ENCODE measurements at regions of chr7 and their contacts with region 1.

Region 1: DNA sequence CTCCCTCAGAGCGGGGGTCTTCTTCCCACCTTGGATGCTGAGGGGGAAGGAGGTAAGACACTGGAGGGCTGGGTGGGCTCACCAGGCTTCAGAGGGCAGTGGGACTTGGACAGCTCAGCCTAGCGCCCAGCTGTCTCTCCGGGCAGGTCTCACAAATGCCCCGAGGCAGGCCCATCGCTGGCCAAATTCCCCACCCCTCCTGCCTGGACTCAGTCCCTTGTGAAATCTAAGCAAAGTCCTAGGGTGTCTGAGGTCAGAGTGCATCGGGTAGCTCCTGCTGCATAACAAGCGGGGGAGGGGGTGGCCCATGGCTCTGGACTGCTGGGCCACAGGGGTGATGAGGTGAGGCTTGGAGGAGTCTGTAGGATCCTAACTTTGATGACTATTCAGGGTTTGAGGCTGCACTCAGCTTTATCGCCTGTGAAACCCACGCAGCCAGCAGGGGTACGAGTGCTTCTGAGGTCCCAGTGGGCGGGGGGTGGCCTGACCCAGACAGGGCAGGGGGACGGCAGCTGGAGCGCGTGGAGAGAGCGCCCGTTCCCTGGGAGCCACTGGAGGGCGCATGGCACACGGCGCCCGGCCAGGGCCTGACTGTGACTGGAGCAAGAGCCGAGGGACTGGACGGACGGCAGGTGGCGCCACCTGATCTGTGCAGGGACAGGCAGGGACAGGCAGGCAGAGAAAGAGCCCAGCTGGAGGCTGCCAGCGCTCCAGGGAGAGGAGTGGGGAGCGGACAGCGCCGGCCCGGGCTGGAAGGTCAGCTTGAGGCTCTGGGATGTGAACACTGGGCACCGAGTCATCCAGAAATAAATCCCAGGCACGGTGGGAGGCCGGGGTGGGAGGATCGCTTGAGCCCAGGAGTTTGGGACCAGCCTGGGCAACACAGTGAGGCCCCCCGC is 10.0 kb downstream of the CYP2W1 start:
- DNase-seq: peak; percentile 93 to 100 (median 98)

Region 2: DNA sequence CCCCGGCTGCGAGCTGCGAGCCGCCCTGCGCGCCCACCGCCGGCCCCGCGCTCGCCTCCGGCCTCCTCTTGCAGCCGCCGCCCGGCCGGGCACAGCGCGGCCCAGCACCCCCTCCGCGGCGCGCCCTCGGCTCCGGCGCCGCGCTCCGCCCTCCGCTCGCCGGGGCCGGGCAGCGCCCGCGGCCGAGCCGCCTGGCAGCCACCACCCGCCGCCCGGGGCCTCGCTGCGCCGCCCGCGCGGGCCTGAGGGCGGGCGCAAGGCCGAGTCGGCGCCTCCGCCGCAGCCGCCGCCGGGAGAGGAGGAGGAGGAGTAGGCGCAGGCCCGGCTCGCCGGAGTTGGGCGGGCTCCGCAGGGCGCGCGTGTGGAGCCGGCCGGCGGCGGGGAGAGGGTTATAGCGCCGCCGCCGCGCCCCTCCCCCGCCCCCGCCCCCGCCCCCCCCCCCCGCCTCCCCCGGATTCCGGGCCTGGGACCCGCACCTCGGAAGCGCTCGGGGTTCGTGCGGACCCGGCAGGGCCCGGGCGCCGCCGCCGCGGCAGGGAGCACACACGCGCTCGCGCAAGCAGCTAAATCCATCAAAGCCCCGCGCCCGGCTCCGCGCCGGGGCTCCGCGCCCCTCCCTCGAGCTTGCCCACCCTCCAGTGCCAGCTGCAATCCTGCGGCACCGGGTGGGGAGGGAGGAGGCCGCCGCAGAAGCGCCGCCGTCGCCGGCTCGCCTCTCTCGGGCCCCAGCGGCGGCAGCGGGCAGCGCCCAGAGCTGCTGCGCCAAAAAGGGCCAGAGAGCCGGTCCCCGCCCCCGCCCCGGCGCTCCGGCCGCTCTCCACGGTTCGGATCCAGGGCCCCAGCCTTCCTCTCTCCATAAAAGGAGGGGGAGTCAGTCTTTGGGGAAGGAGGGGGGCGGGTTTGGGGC is 473.2 kb before region 1 on chr7 and contains the start of gene PDGFA:
- intact Hi-C with region 1: no loop called
- DNase-seq: peak in 38 of 42 donors; percentile 40 to 85 (median 70)

Region 3: DNA sequence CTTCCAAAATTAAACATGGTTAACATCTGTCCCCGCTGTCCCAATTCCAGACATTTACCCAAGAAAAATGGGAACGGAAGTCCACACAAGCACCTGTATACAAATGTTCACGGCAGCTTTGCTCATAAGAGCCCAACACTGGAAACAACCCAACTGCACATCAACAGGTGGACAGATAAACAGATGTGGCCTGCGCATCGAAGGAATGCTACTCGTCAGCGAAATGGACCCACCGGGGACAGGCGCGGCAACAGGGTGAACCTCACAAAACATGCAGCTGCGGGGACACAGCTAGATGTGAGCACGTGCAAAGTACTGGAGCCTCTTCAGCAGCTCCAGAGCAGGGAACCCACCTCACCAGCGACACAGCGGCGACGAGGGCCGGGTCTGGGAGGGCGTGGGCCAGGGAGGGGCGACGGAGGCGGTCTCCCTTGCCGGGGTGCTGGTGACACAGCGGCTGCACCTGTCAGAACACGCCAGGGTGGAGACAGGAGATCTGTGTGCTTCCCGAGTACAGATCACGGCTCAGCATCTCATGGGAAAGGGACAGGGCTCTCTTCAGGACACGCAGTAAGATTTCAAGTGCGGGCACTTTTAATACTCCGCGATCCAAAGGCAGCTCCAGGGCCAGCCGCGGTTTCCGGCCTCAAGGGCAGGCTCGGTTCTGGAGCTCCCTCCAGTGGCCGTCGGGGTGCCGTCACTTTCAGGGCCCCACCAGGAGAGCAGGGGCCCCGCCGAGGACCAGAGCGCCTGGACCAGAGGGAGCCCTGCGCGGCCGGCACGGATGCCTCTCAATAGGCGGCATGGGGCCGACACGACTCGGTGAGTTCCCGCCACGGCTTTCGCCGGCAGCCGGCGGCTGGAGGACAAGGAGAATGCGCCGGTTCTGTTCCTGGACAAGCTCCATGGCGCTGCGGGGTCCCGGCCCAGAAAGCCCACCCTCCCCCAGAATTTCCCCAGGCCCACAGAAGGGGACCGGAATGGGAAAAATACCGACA is 72.6 kb after region 1 on chr7:
- intact Hi-C with region 1: loop called (anchors 1 kb)
- DNase-seq: peak; percentile 77 to 95 (median 89)

Region 4: DNA sequence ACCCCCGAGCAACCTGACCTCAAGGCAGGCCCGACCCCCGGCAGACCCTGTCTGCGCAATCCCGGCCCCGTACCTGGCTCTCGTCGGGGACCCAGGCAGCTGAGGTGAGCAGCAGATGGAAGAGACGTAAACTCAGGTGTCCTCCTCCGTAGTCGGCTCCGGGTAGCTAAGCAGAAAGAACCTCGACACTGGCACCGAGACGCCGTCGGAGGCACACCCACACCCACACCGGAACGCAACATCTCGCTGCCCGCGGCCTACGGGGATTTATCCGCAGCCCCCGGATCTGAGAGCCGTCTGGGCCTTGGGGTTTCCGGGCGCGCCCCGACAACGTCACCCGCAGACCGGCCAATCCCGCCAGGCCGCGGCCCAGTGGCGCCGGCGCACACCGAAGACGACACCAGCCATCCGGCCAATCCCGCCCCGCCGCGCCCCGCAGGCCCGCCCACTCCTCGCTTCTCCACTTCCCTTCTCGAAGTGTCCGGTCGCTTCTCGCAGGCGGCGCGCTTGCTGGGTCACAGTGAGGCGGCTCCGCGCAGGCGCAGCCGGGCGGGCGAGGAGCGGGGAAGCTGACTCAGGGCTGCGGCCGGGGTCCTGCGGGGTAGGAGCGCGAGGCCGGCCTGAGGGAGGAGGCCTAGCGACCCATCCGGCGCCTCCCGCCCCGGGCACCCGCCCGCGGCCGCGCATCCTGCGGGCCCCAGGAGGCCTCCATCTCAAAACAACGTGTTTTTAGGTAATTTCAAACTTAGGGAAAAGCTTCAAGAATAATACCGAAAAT is 167.1 kb after region 1 on chr7 and contains the start of gene ZFAND2A:
- intact Hi-C with region 1: loop called (anchors 10 kb)
- DNase-seq: peak; percentile 95 to 100 (median 98)